Caco-2 (cell line): ENCODE measurements at regions of chr17 and their contacts with region 1.

Region 1: GRCh38 chr17:48131216-48131824 is 23.8 kb downstream of the SNX11 start:
- DNase-seq: peak; percentile 89 to 95
- H3K4me3 ChIP-seq: no peak overlapping the region
- H3K4me3 Mint-ChIP-seq: no peak overlapping the region
- H3K27ac Mint-ChIP-seq: no peak overlapping the region
- H3K4me1 ChIP-seq: no peaks in the 10 kb centered on the region
- H3K4me1 Mint-ChIP-seq: no peaks in the 10 kb centered on the region
- H3K27me3 ChIP-seq: no peaks in the 10 kb centered on the region
- H3K27me3 Mint-ChIP-seq: peaks cover 4% of the 10 kb centered on the region
- CTCF ChIP-seq: peak; percentile 99

Region 2: DNA sequence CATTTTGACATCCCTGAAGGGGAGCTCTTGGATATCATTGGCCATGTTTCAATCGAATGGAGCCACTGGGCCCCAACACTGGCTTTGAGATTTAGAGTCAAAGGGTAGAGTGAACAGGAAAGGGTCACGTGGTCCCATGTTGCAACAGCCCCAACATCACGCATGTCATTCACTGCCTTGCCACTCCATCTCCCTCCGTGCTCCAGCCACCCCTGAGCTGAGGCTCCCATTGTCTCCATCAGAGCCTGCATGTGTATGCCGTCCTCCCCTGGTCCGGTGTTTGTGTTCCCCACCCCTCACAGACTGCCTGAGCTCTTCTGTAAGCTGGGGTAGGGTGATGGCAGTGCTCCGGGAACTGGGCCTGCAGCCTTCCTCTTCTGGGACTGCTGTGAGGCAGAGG is 71.1 kb before region 1 on chr17:
- CTCF ChIA-PET with region 1: interaction called, 11 read pairs
- POLR2A ChIA-PET with region 1: no interaction called
- intact Hi-C with region 1: no loop called
- DNase-seq: no peak
- H3K4me3 ChIP-seq: no peak overlapping the region
- H3K4me3 Mint-ChIP-seq: peak overlapping the region; percentile 13
- H3K27ac Mint-ChIP-seq: peak overlapping the region; percentile 65
- H3K4me1 ChIP-seq: peaks cover 8% of the 10 kb centered on the region
- H3K4me1 Mint-ChIP-seq: peaks cover 43% of the 10 kb centered on the region
- H3K27me3 ChIP-seq: no peaks in the 10 kb centered on the region
- H3K27me3 Mint-ChIP-seq: no peaks in the 10 kb centered on the region
- CTCF ChIP-seq: no peak

Region 3: GRCh38 chr17:48074315-48075081 is 56.8 kb before region 1 on chr17:
- CTCF ChIA-PET with region 1: interaction called, 17 read pairs
- POLR2A ChIA-PET with region 1: no interaction called
- intact Hi-C with region 1: no loop called
- DNase-seq: peak; percentile 89 to 92
- H3K4me3 ChIP-seq: no peak overlapping the region
- H3K4me3 Mint-ChIP-seq: no peak overlapping the region
- H3K27ac Mint-ChIP-seq: no peak overlapping the region
- H3K4me1 ChIP-seq: no peaks in the 10 kb centered on the region
- H3K4me1 Mint-ChIP-seq: no peaks in the 10 kb centered on the region
- H3K27me3 ChIP-seq: no peaks in the 10 kb centered on the region
- H3K27me3 Mint-ChIP-seq: no peaks in the 10 kb centered on the region
- CTCF ChIP-seq: peak; percentile 97 to 98

Region 4: GRCh38 chr17:48107168-48108132 is 23.9 kb before region 1 on chr17 and contains the start of gene SNX11:
- CTCF ChIA-PET with region 1: interaction called, 14 read pairs
- POLR2A ChIA-PET with region 1: no interaction called
- intact Hi-C with region 1: no loop called
- DNase-seq: peak; percentile 100
- H3K4me3 ChIP-seq: peak within 1 kb of the TSS; percentile 60
- H3K4me3 Mint-ChIP-seq: peak within 1 kb of the TSS; percentile 95
- H3K27ac Mint-ChIP-seq: peak within 1 kb of the TSS; percentile 95
- H3K4me1 ChIP-seq: 0 out of 2 replicates have a peak, but pooled peaks cover 6% of the 10 kb centered on the region
- H3K4me1 Mint-ChIP-seq: peaks cover 7% of the 10 kb centered on the region
- H3K27me3 ChIP-seq: no peaks in the 10 kb centered on the region
- H3K27me3 Mint-ChIP-seq: no peaks in the 10 kb centered on the region
- CTCF ChIP-seq: peak; percentile 33 to 48
- total RNA-seq, gene SNX11: 36.7 and 40.7 TPM in 2 replicates

Region 5: GRCh38 chr17:48228721-48229120 is 97.4 kb after region 1 on chr17:
- CTCF ChIA-PET with region 1: no interaction called
- POLR2A ChIA-PET with region 1: no interaction called
- intact Hi-C with region 1: no loop called
- DNase-seq: no peak
- H3K4me3 ChIP-seq: no peak overlapping the region
- H3K4me3 Mint-ChIP-seq: no peak overlapping the region
- H3K27ac Mint-ChIP-seq: no peak overlapping the region
- H3K4me1 ChIP-seq: no peaks in the 10 kb centered on the region
- H3K4me1 Mint-ChIP-seq: no peaks in the 10 kb centered on the region
- H3K27me3 ChIP-seq: no peaks in the 10 kb centered on the region
- H3K27me3 Mint-ChIP-seq: no peaks in the 10 kb centered on the region
- CTCF ChIP-seq: peak; percentile 39 to 58

Region 6: DNA sequence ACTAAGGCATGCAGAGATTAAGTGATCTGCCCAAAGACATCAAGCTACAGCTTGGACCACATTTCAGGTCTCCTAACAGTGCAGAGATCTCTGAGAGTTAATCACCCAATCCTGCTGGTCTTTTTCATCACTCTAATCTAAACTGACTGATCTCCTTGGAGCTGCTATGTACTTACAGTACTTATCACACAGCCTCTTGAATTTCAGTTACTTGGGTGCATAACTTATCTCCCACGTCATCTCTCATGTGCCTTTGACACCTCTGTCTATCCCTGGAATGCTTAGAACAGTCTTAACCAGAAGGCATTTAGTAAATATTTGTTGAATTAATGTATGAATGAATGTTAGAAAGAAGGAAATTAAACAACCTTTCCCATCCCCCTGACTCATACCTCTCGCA is 115.3 kb after region 1 on chr17:
- CTCF ChIA-PET with region 1: no interaction called
- POLR2A ChIA-PET with region 1: no interaction called
- intact Hi-C with region 1: no loop called
- DNase-seq: peak; percentile 64 to 73
- H3K4me3 ChIP-seq: no peak overlapping the region
- H3K4me3 Mint-ChIP-seq: peak overlapping the region; percentile 38
- H3K27ac Mint-ChIP-seq: peak overlapping the region; percentile 37
- H3K4me1 ChIP-seq: peaks cover 65% of the 10 kb centered on the region
- H3K4me1 Mint-ChIP-seq: peaks cover 59% of the 10 kb centered on the region
- H3K27me3 ChIP-seq: no peaks in the 10 kb centered on the region
- H3K27me3 Mint-ChIP-seq: no peaks in the 10 kb centered on the region
- CTCF ChIP-seq: no peak